ENCODE measurements at regions of chr13 and their contacts with region 1.

Region 1: DNA sequence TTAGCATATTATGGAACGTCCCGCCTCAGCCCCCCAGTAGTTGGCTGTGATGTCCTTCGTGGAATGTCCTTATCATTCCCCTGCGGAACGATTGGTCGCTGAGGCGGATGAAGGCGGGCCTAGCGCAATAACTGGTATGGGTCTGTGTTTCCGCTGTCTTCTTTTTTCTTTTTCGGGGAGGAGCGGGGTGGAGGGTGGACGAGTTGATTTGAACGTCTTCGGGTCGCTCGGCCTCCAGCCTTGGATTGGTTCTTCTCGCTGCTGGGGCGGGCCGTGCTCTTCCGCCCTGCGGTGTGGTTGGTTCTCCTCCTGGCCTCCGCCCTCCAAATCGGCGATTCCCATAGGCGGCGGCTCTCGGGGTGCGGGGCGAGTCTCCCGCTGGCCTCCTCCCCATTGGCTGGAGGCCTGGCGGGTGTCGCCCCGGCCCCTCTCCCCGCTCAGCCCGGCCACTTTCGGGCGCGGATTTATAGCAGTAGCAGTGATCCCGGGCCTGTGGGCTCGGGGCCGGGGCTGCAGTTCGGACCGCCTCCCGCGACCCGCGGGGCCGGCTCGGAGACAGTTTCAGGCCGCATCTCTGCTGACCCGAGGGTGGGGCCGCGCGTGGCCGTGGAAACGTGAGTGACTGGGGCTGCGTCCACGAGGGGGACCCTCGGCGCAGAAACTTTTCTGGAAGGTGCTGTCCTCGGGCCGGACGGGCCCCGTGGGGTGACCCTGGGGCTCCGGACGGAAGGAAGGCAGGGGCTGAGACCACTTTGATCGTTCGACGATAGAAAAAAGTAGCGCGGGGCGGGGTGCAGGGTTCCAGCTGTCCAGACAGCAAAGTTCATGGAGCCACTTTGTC is 2.1 kb downstream of the ING1 start:
- DNase-seq: peak; percentile 95
- H3K4me3 Mint-ChIP-seq: peak overlapping the region; percentile 98
- H3K27ac Mint-ChIP-seq: peak overlapping the region; percentile 98
- H3K4me1 Mint-ChIP-seq: peaks cover 27% of the 10 kb centered on the region
- H3K27me3 Mint-ChIP-seq: no peaks in the 10 kb centered on the region

Region 2: DNA sequence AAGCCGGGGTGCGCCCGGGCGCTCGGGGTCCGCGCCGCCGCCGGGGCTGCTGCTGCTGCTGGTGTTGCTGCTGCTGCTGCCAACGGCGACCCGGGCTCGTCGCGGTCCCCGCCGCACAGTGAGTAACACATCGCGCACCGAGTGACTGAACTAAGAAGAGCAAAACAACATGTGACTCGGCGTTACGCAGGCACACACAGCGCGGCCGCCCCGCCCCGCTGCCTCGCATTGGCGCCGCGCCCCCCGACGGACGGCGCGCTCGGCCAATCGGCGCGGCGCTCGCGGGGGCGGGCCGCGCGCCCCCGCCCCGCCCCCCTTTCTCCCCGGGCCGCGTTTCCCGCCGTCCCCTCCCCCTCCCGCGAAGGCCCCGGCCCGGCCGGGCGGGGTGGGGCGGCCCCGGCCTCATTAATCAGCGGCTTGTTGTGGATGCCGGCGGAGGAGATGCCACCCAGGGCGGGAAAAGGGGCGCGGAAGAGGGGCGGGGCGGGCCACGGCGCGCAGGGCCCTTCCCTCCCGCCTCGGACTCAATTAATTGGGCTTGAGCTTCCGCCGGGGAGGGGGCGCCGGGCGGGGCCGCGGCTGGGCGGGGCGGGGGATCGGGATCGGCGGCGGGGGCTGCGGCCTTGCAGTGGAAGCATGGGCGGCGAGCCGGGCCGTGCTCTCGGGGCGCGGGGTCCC is 929.0 kb before region 1 on chr13 and contains the start of gene IRS2:
- intact Hi-C with region 1: loop called (anchors 2 kb)
- DNase-seq: peak; percentile 89
- H3K4me3 Mint-ChIP-seq: peak within 1 kb of the TSS; percentile 78
- H3K27ac Mint-ChIP-seq: peak within 1 kb of the TSS; percentile 78
- H3K4me1 Mint-ChIP-seq: peaks cover 12% of the 10 kb centered on the region
- H3K27me3 Mint-ChIP-seq: peaks cover 26% of the 10 kb centered on the region
- total RNA-seq, gene IRS2: 3.9 and 4.3 TPM in 2 replicates

Region 3: GRCh38 chr13:110615322-110616102 is 100.1 kb before region 1 on chr13 and contains the start of gene NAXD:
- intact Hi-C with region 1: loop called (anchors 1 kb)
- DNase-seq: peak; percentile 80
- H3K4me3 Mint-ChIP-seq: peak within 1 kb of the TSS; percentile 96
- H3K27ac Mint-ChIP-seq: peak within 1 kb of the TSS; percentile 94
- H3K4me1 Mint-ChIP-seq: peaks cover 24% of the 10 kb centered on the region
- H3K27me3 Mint-ChIP-seq: peaks cover 4% of the 10 kb centered on the region
- total RNA-seq, gene NAXD: 22.0 and 22.2 TPM in 2 replicates

Region 4: GRCh38 chr13:110690516-110690915 is 25.1 kb before region 1 on chr13:
- intact Hi-C with region 1: no loop called
- DNase-seq: no peak
- H3K4me3 Mint-ChIP-seq: no peak overlapping the region
- H3K27ac Mint-ChIP-seq: no peak overlapping the region
- H3K4me1 Mint-ChIP-seq: no peaks in the 10 kb centered on the region
- H3K27me3 Mint-ChIP-seq: no peaks in the 10 kb centered on the region

Region 5: GRCh38 chr13:110819203-110820014 is 103.8 kb after region 1 on chr13:
- intact Hi-C with region 1: loop called (anchors 1 kb)
- DNase-seq: peak; percentile 61
- H3K4me3 Mint-ChIP-seq: no peak overlapping the region
- H3K27ac Mint-ChIP-seq: no peak overlapping the region
- H3K4me1 Mint-ChIP-seq: peaks cover 8% of the 10 kb centered on the region
- H3K27me3 Mint-ChIP-seq: peaks cover 16% of the 10 kb centered on the region

Region 6: DNA sequence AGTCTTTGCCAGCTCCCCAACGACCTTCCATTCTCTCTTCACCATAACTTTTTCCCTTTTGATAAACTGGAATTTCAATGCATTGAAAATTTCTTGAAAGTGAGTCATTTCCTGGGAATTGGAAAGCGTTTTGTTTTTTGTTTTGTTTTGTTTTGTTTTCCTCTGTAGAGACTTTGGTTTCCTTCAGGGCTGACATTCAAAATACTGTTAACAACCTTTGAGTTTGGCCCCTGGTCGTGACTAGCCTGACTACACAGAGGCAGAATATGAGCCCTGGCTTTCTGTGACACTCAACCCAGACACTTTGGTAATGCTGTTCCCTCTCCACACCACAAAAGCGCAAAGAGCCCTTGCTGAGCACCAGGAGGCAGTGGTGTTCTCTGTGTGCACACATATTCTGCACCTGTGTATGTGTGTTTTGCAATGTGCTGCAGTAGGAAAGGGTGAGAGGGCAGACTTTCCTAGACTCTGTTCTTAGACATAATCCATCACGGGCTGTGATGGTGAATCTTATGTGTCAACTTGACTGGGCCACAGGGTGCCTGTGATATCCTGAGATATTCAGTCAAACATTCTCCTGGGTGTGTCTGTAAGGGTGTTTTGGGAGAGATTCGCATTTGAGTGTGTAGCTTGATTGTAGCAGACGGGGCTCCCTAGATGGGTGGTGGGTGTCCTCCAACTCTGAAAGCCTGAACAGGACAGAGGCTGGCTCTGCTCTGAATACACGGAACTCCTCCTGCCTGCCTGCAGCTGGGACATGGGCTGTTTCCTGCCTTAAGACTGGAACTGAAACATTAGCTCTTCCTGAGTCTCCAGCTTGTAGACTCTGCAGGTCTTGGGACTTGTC is 228.7 kb after region 1 on chr13:
- intact Hi-C with region 1: no loop called
- DNase-seq: peak; percentile 53
- H3K4me3 Mint-ChIP-seq: peak overlapping the region; percentile 51
- H3K27ac Mint-ChIP-seq: peak overlapping the region; percentile 87
- H3K4me1 Mint-ChIP-seq: peaks cover 56% of the 10 kb centered on the region
- H3K27me3 Mint-ChIP-seq: no peaks in the 10 kb centered on the region

Region 7: DNA sequence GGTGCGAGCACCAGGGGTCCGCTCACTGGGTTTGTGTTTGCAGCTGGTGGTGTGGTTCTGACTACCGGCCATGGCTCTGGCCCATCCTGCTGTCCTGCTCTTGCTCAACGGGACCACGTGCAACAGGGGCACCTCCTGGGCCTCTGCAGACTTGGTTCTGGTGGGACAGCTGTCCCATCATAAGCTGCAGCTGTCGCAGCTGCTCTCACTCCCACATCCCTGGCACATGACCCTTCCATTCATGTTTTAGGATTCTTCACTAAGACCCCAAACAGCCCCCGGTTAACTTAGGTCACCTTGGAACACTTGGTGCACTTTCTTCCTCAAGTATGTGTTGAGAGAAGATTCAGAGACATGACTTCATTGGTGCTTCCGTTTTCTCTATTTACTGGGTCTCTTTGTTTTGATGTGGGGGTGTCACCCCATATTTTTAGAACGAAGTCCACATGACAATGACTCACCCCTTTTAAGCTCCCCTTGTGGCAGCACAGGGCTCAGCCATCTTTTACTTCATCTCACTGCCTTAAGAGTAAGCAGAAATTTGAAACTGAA is 331.1 kb after region 1 on chr13:
- intact Hi-C with region 1: loop called (anchors 2 kb)
- DNase-seq: no peak
- H3K4me3 Mint-ChIP-seq: no peak overlapping the region
- H3K27ac Mint-ChIP-seq: peak overlapping the region; percentile 56
- H3K4me1 Mint-ChIP-seq: peaks cover 11% of the 10 kb centered on the region
- H3K27me3 Mint-ChIP-seq: peaks cover 8% of the 10 kb centered on the region

Measured in activated T-helper 1 cell treated with anti-CD3 and anti-CD28 coated beads, Interleukin-12 subunit alpha, Interleukin-12 subunit beta, Interleukin-2, Interleukin-4 antibody, amounts not matched to agents 30 ng/mL and 10 ng/mL and 1 ng/mL, durations not matched to agents 14 hours and 24 hours and 36 hours (primary cell).